Left ventricle myocardium inferior (tissue), 1 donor: ENCODE measurements at regions of chr2 and their contacts with region 1.

Region 1: DNA sequence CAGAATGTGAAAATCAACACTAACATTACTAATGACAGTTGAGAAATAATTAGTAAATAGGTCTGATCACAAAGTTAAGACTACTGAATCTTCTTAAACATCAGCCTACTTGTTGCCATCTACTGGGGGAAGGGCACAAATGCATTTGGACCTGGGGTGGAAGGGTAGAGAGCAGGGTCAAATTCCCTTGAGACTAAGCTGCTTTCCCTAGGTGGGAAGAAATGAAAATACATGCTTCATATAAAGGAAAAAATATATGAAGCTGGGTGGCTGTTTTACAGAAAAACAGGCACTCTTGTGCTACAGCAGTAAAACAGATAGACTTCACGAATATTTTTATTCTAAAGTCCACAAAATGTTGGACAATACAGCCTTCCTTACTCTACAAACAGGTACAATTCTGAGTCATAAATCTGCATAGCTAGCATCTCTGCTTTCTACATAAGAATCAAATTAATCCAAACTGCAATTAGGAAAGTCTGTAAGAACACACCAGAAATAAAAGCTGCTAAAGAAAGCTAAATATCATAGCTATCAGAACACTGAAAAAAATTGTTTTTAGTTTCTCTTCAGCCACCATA is 10.9 kb downstream of the TRIP12 start:
- DNase-seq: no peak
- H3K4me3 ChIP-seq: no peak overlapping the region
- H3K27ac ChIP-seq: no peak overlapping the region
- H3K4me1 ChIP-seq: peaks cover 85% of the 10 kb centered on the region
- H3K27me3 ChIP-seq: no peaks in the 10 kb centered on the region
- CTCF ChIP-seq: peak; percentile 33

Region 2: DNA sequence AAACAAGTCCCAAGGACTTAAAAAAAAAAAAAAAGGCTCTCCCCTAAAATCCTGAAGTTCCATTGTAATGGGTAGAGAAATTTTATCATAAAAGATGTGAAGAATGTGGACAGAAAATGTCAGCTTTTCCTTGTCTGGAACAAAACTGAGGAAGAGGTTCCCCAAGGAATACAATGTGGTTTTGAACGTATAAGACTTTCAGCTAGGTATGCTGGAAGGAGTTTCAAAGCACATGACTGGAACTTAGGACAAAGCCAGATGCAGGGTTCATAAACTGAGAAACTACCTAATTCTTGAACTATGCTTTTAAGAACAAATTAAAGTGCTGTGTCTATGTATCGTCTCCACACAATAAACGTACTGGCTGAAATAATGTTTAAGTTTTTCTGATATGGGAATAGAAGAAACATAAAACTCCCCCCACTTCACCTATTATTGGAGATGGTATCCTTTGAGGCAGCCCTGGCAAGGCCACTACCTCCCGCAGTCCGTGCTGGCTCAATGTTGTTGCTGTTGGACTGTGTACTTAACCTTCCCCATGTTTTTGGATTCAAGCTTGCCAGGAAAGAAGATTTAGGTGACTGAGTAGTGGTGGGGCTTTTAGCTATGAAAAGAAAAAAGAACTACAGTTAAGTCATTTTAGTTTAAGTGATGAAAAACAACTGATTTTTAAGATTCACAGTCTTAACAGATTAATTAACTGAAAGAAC is 112.3 kb before region 1 on chr2:
- intact Hi-C with region 1: loop called (anchors 10 kb)
- DNase-seq: no peak
- H3K4me3 ChIP-seq: no peak overlapping the region
- H3K27ac ChIP-seq: peak overlapping the region; percentile 38
- H3K4me1 ChIP-seq: peaks cover 28% of the 10 kb centered on the region
- H3K27me3 ChIP-seq: no peaks in the 10 kb centered on the region
- CTCF ChIP-seq: no peak